H1 (cell line): ENCODE measurements at regions of chr5 and their contacts with region 1.

Region 1: GRCh38 chr5:174920906-174921550 is 196.6 kb downstream of the MSX2 start:
- DNase-seq: peak; percentile 17 to 61
- H3K4me3 ChIP-seq: no peak overlapping the region; a peak in 1 of 8 replicates
- H3K27ac ChIP-seq: no peak overlapping the region
- H3K4me1 ChIP-seq: peaks cover 0 to 10% (median 6%) of the 10 kb centered on the region in 4 experiments; a peak in 5 of 7 replicates
- H3K27me3 ChIP-seq: peaks cover 0 to 3% (median 0%) of the 10 kb centered on the region in 4 experiments; a peak in 1 of 7 replicates
- CTCF ChIP-seq: no peak
- EP300 ChIP-seq: no peak
- POLR2A ChIP-seq: no peak
- RAD21 ChIP-seq: no peak

Region 2: GRCh38 chr5:174828804-174829510 is 92.1 kb before region 1 on chr5:
- CTCF ChIA-PET with region 1: no interaction called
- POLR2A ChIA-PET with region 1: no interaction called
- DNase-seq: no peak
- H3K4me3 ChIP-seq: no peak overlapping the region
- H3K27ac ChIP-seq: no peak overlapping the region
- H3K4me1 ChIP-seq: no peaks in the 10 kb centered on the region
- H3K27me3 ChIP-seq: no peaks in the 10 kb centered on the region
- CTCF ChIP-seq: no peak
- EP300 ChIP-seq: no peak
- POLR2A ChIP-seq: no peak
- RAD21 ChIP-seq: no peak

Region 3: GRCh38 chr5:174910245-174910737 is 10.7 kb before region 1 on chr5:
- CTCF ChIA-PET with region 1: interaction called, 25 read pairs
- POLR2A ChIA-PET with region 1: no interaction called
- DNase-seq: peak; percentile 59 to 92
- H3K4me3 ChIP-seq: no peak overlapping the region
- H3K27ac ChIP-seq: no peak overlapping the region
- H3K4me1 ChIP-seq: no peaks in the 10 kb centered on the region
- H3K27me3 ChIP-seq: 0 out of 7 replicates have a peak, but pooled peaks cover 0 to 3% (median 0%) of the 10 kb centered on the region in 4 experiments
- CTCF ChIP-seq: peak; percentile 84 to 92 (median 90)
- EP300 ChIP-seq: no peak
- POLR2A ChIP-seq: no peak
- RAD21 ChIP-seq: peak; percentile 96 to 97